Left cardiac atrium (tissue), 4 donors: ENCODE measurements at regions of chr10 and their contacts with region 1.

Region 1: DNA sequence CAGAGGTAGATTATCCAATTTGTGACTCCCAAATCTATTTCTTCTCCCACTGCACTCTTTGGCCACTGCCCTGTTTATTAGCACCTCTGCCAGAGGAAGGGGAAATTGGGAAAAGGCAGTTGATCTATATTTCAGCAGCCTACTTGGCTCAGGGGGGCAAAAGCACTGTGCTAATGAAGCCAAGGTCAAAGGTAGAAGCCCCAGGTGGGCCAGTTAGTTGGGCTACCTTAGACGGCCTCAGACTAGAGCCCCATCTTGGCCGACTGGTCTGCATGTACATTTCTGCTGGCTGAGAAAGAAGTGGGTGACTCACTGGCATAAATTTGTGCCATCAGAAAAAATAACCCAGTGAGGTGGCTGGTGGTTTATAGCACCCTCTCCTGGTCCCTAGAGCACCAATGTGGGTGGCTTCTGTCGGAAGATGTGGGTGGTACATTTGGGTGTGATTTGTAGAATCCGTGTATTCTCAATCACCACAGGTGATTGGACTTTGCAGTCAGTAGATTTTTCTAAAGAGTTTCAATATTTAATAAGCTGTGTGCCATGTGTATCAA is 293.3 kb upstream of the MKI67 start:
- DNase-seq: no peak
- ATAC-seq: no peak

Region 2: DNA sequence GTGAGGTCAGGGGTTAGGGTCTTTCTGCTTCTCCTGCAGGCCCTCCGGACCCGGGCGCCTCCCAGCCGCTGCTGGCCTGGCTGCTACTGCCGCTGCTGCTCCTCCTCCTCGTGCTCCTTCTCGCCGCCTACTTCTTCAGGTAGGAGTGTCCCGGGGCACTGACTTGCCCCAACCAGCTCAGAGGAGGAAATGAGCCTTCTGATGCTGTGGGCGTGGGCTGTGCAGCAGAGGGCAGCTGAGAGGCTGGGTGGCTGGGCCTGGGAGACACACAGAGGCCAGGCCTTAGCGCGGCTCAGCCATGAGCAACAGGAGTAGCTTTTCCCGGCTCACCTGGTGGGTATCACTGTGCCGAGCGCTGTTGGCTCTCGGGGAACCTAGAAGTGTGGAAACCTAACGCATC is 372.2 kb before region 1 on chr10:
- intact Hi-C with region 1: no loop called
- DNase-seq: peak; percentile 81
- ATAC-seq: peak; percentile 80 to 89

Region 3: GRCh38 chr10:128263891-128264688 is 155.5 kb before region 1 on chr10:
- intact Hi-C with region 1: loop called (anchors 2 kb)
- DNase-seq: peak; percentile 60
- ATAC-seq: peak; percentile 51 to 53

Region 4: DNA sequence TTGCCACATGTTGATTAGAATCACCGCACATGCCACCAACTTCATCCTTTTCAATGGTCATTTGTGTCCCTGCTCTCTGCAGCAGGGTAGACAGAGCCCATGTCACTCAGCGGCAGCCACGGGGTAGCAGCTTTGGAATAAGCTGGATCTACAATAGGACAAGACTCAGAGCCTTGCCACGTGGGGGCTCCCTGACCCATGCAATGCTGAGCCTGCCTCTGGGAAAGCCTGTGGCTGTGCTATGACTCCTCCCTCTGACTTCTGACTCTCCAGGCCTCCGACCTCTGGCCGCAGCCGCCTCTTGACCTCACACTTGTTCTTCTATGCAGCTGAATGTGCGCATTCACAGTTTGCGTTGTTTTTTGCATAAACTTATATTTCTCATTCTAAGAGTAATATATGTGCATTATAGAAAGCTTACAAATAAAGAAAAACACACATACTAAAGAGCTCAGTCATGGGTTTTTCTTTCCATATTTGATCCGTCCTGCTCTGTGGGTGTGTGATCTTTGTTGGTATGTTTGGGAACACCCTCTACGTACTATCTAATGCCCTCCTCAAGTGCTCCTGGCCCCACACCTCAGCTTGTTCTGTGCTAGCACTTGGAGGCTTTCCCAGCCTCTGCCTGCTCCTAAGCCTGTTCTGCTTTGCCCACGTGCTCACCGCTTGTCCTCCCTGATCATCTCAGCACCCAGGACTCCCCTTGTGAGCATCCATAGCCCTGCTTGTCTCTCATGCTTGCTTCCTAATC is 95.3 kb before region 1 on chr10:
- intact Hi-C with region 1: loop called in 1 of 2 experiments (anchors 5 kb)
- DNase-seq: peak; percentile 59
- ATAC-seq: peak; percentile 90 to 94

Region 5: GRCh38 chr10:128337860-128338378 is 81.6 kb before region 1 on chr10:
- intact Hi-C with region 1: loop called in 1 of 2 experiments (anchors 10 kb)
- DNase-seq: peak; percentile 37
- ATAC-seq: peak; percentile 59 to 91

Region 6: DNA sequence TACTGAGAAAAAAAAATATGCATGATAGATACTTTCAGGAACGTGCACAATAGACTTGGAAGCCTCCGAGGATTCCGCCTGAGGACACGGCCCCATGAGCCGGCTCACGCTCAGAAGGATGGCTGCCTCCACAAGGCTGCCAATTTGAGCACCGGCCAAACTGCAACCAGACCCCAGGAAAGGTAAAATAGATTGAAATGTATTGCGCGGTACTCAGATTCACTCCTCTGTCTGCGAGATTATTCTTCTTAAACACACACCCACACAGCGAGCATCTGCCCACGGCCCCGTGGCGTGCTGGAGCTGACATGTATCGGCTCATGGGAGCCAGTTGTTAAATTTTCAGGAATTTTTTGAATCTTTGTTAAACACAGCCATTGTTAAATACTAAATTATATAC is 359.9 kb after region 1 on chr10:
- intact Hi-C with region 1: no loop called
- DNase-seq: no peak
- ATAC-seq: no peak